ENCODE measurements at regions of chr3 and their contacts with region 1.

Region 1: DNA sequence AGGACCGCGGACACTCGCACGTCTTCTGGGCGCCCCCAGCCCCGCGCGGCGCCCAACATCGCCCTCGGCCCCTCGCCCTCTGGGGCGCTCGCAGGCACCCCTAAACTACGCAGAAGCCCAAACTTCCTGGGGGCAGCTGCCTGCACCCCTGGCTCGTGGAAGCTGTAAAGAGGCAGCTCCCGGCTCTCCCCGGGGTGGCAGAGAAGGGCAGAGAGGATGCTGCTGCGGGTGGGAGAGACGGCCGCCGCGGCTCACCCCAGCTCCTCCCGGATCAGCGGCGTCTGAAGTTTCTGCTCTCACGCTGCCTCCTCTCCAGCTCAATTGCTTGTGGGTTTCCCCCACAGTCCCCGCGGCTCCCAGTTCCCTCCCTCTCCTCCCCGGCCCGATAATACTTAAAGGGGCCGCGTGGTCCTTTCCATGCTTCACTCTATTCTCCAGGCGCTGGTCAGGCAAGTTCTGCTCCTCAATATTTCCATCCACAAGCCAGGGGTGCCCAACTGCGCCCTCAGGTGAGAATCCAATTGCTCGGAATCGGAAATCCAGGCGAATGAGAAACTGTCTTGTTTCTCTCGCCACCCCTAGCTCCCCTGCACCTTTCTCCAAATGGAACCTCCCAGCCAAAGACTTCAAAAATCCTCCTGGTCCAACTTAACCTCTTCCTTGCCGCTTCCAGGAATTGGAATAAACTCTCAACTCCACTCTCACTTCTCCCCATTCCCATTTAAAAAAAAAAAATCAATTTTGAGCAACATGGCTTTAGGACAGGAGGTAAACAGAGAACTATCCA is 748.5 kb downstream of the ROBO1 start:
- DNase-seq: peak; percentile 96
- H3K4me3 ChIP-seq: peak overlapping the region; percentile 91
- H3K27ac ChIP-seq: peak overlapping the region; percentile 99
- H3K4me1 ChIP-seq: peaks cover 29% of the 10 kb centered on the region
- H3K27me3 ChIP-seq: no peaks in the 10 kb centered on the region
- CTCF ChIP-seq: no peak

Region 2: GRCh38 chr3:78545827-78546226 is 473.5 kb before region 1 on chr3:
- CTCF ChIA-PET with region 1: no interaction called
- POLR2A ChIA-PET with region 1: no interaction called
- intact Hi-C with region 1: no loop called
- DNase-seq: no peak
- H3K4me3 ChIP-seq: no peak overlapping the region
- H3K27ac ChIP-seq: no peak overlapping the region
- H3K4me1 ChIP-seq: no peaks in the 10 kb centered on the region
- H3K27me3 ChIP-seq: no peaks in the 10 kb centered on the region
- CTCF ChIP-seq: no peak

Region 3: GRCh38 chr3:78728406-78729145 is 290.8 kb before region 1 on chr3:
- CTCF ChIA-PET with region 1: no interaction called
- POLR2A ChIA-PET with region 1: no interaction called
- intact Hi-C with region 1: loop called (anchors 5 kb)
- DNase-seq: peak; percentile 96
- H3K4me3 ChIP-seq: peak overlapping the region; percentile 14
- H3K27ac ChIP-seq: peak overlapping the region; percentile 33
- H3K4me1 ChIP-seq: peaks cover 76% of the 10 kb centered on the region
- H3K27me3 ChIP-seq: no peaks in the 10 kb centered on the region
- CTCF ChIP-seq: no peak

Region 4: GRCh38 chr3:78791753-78792152 is 227.6 kb before region 1 on chr3:
- CTCF ChIA-PET with region 1: no interaction called
- POLR2A ChIA-PET with region 1: no interaction called
- intact Hi-C with region 1: no loop called
- DNase-seq: no peak
- H3K4me3 ChIP-seq: no peak overlapping the region
- H3K27ac ChIP-seq: no peak overlapping the region
- H3K4me1 ChIP-seq: peaks cover 8% of the 10 kb centered on the region
- H3K27me3 ChIP-seq: no peaks in the 10 kb centered on the region
- CTCF ChIP-seq: no peak

Region 5: DNA sequence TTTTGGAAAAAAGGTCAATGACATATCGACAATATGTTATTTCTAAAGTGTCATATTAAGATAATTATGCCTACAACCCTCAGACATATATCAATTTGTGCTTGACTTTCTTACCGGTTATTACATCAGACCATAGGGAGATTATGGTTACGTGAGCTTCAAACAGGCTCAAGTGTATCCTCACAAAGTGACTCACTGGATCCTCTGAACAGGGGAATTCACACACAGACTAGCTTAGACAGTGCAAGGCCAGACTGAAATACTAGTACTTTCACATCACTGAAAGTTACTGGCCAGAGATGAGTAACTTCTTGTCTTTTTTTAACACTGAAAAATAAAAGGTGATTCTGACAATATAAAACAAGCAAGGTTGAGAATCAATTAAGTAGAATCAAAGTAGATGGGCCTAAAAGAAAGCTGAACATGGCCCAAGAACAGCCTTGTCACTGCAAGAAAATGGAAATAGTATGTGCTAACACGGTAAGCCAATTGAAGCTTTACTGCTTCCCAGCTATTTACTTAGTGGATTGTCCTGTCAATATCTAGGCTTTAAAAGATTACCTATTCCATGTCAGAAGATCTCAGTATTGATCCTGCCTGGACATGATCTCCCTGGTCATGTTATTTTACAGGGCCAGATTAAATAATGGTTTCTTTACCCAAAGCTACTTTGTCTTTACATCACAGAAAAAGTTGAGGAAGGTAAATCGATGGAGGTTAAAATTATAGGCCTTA is 100.1 kb before region 1 on chr3:
- CTCF ChIA-PET with region 1: no interaction called
- POLR2A ChIA-PET with region 1: no interaction called
- intact Hi-C with region 1: loop called (anchors 5 kb)
- DNase-seq: peak; percentile 80
- H3K4me3 ChIP-seq: no peak overlapping the region
- H3K27ac ChIP-seq: peak overlapping the region; percentile 91
- H3K4me1 ChIP-seq: peaks cover 52% of the 10 kb centered on the region
- H3K27me3 ChIP-seq: no peaks in the 10 kb centered on the region
- CTCF ChIP-seq: no peak

Region 6: DNA sequence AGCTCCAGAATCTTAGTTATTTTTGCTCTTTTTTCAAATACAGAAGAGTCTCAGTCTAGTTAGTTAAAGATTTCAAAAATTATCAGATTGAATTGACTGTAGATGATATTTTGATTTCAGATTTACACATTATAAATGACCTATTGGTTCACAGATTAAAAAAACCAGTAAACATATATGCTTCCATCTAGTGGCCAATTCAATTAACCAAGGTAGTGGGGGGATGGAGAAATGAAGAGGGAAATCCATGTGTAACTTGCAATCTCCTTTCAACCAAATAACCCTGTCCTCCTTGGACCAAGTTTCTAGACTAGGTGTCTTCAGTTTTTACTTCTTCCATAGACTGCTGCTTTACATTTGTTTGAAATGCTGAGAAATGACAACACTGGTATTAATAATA is 41.3 kb before region 1 on chr3:
- CTCF ChIA-PET with region 1: no interaction called
- POLR2A ChIA-PET with region 1: no interaction called
- intact Hi-C with region 1: loop called (anchors 5 kb)
- DNase-seq: peak; percentile 68
- H3K4me3 ChIP-seq: peak overlapping the region; percentile 37
- H3K27ac ChIP-seq: peak overlapping the region; percentile 62
- H3K4me1 ChIP-seq: peaks cover 80% of the 10 kb centered on the region
- H3K27me3 ChIP-seq: no peaks in the 10 kb centered on the region
- CTCF ChIP-seq: peak; percentile 69